ENCODE measurements at regions of chr20 and their contacts with region 1.

Region 1: GRCh38 chr20:32240220-32240619 is 32.5 kb downstream of the POFUT1 start:
- DNase-seq: peak in 1 of 2 experiments; percentile 68
- H3K4me3 ChIP-seq: no peak overlapping the region
- H3K4me3 Mint-ChIP-seq: no peak overlapping the region
- H3K27ac Mint-ChIP-seq: no peak overlapping the region
- H3K4me1 ChIP-seq: peaks cover 32% of the 10 kb centered on the region
- H3K4me1 Mint-ChIP-seq: peaks cover 31% of the 10 kb centered on the region
- H3K27me3 ChIP-seq: no peaks in the 10 kb centered on the region
- H3K27me3 Mint-ChIP-seq: no peaks in the 10 kb centered on the region
- CTCF ChIP-seq: peak; percentile 53 to 76

Region 2: GRCh38 chr20:32277361-32278198 is 37.4 kb after region 1 on chr20 and contains the start of gene KIF3B:
- CTCF ChIA-PET with region 1: no interaction called
- POLR2A ChIA-PET with region 1: no interaction called
- intact Hi-C with region 1: loop called (anchors 5 kb)
- DNase-seq: peak; percentile 97 to 98
- H3K4me3 ChIP-seq: peak within 1 kb of the TSS; percentile 84
- H3K4me3 Mint-ChIP-seq: peak within 1 kb of the TSS; percentile 90
- H3K27ac Mint-ChIP-seq: peak within 1 kb of the TSS; percentile 88
- H3K4me1 ChIP-seq: peaks cover 16% of the 10 kb centered on the region
- H3K4me1 Mint-ChIP-seq: peaks cover 20% of the 10 kb centered on the region
- H3K27me3 ChIP-seq: no peaks in the 10 kb centered on the region
- H3K27me3 Mint-ChIP-seq: no peaks in the 10 kb centered on the region
- CTCF ChIP-seq: no peak
- total RNA-seq, gene KIF3B: 49.0 and 50.0 TPM in 2 replicates

Region 3: GRCh38 chr20:32315891-32316290 is 75.7 kb after region 1 on chr20:
- CTCF ChIA-PET with region 1: no interaction called
- POLR2A ChIA-PET with region 1: no interaction called
- intact Hi-C with region 1: no loop called
- DNase-seq: peak in 1 of 2 experiments; percentile 12
- H3K4me3 ChIP-seq: no peak overlapping the region
- H3K4me3 Mint-ChIP-seq: no peak overlapping the region
- H3K27ac Mint-ChIP-seq: no peak overlapping the region
- H3K4me1 ChIP-seq: no peaks in the 10 kb centered on the region
- H3K4me1 Mint-ChIP-seq: peaks cover 10% of the 10 kb centered on the region
- H3K27me3 ChIP-seq: no peaks in the 10 kb centered on the region
- H3K27me3 Mint-ChIP-seq: no peaks in the 10 kb centered on the region
- CTCF ChIP-seq: no peak

Region 4: DNA sequence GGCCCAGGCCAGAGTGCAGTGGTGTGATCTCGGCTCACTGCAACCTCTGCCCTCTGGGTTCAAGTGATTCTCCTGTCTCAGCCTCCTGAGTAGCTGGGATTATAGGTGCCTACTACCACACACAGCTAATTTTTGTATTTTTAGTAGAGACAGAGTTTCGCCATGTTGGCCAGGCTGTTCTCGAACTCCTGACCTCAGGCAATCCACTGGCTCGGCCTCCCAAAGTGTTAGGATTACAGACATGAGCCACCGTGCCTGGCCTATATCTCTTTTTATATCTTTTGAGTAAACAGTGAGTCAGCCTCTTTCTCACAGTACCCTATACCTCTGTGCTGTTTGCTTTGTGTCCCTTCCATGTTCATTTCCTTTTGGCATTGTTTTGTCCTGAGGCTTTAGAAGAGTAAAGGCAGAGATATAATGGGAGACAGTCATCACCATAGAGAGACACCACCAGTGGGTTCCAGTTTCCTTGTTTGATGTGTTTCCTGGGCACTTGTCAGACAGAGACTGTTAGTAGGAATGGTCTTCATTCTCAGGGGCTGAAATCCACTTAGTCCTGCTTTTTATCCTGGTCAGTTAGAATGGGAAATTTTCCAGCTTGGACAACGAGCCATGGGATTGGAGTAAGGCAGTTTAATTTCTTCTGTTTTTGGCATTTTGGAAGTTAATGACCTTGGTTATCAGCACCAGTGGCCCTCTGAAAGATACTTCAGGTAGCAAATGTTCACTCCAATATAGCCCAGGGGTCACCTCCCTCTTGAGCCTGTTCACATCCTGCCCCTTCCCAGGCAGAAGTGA is 85.7 kb after region 1 on chr20:
- CTCF ChIA-PET with region 1: no interaction called
- POLR2A ChIA-PET with region 1: no interaction called
- intact Hi-C with region 1: no loop called
- DNase-seq: peak; percentile 79 to 85
- H3K4me3 ChIP-seq: no peak overlapping the region
- H3K4me3 Mint-ChIP-seq: peak overlapping the region; percentile 41
- H3K27ac Mint-ChIP-seq: peak overlapping the region; percentile 78
- H3K4me1 ChIP-seq: peaks cover 45% of the 10 kb centered on the region
- H3K4me1 Mint-ChIP-seq: peaks cover 21% of the 10 kb centered on the region
- H3K27me3 ChIP-seq: no peaks in the 10 kb centered on the region
- H3K27me3 Mint-ChIP-seq: no peaks in the 10 kb centered on the region
- CTCF ChIP-seq: no peak